GM12878 (cell line): ENCODE measurements at regions of chr16 and their contacts with region 1.

Region 1: GRCh38 chr16:68760671-68761275 is 23.7 kb downstream of the CDH1 start:
- DNase-seq: peak; percentile 95
- ATAC-seq: peak; percentile 73
- H3K4me3 ChIP-seq: peak overlapping the region; percentile 44
- H3K27ac ChIP-seq: peak overlapping the region; percentile 69
- H3K4me1 ChIP-seq: peaks cover 69% of the 10 kb centered on the region
- H3K27me3 ChIP-seq: no peaks in the 10 kb centered on the region
- CTCF ChIP-seq: no peak
- EP300 ChIP-seq: peak; percentile 58 to 84; a peak in 3 of 4 replicates
- POLR2A ChIP-seq: peak; percentile 69
- RAD21 ChIP-seq: 0 out of 2 replicates have a peak, but pooled peaks have one; percentile 10

Region 2: GRCh38 chr16:68528686-68529379 is 231.9 kb before region 1 on chr16:
- CTCF ChIA-PET with region 1: interaction called, 3 read pairs
- POLR2A ChIA-PET with region 1: no interaction called
- RAD21 ChIA-PET with region 1: interaction called, 6 read pairs
- SMC1A ChIA-PET with region 1: no interaction called
- in situ Hi-C with region 1: no loop called
- intact Hi-C with region 1: loop called (anchors 5 kb)
- DNase-seq: peak; percentile 39
- ATAC-seq: peak; percentile 90
- H3K4me3 ChIP-seq: no peak overlapping the region
- H3K27ac ChIP-seq: no peak overlapping the region
- H3K4me1 ChIP-seq: peaks cover 7% of the 10 kb centered on the region
- H3K27me3 ChIP-seq: no peaks in the 10 kb centered on the region
- CTCF ChIP-seq: peak; percentile 95 to 98 (median 96); a peak in 5 of 6 replicates
- EP300 ChIP-seq: no peak
- POLR2A ChIP-seq: no peak
- RAD21 ChIP-seq: peak; percentile 96

Region 3: GRCh38 chr16:68711421-68712139 is 49.2 kb before region 1 on chr16:
- CTCF ChIA-PET with region 1: interaction called, 5 read pairs
- POLR2A ChIA-PET with region 1: interaction called, 5 read pairs
- RAD21 ChIA-PET with region 1: interaction called, 20 read pairs
- SMC1A ChIA-PET with region 1: interaction called, 6 read pairs
- in situ Hi-C with region 1: no loop called
- intact Hi-C with region 1: no loop called
- DNase-seq: no peak
- ATAC-seq: peak; percentile 86
- H3K4me3 ChIP-seq: no peak overlapping the region
- H3K27ac ChIP-seq: no peak overlapping the region
- H3K4me1 ChIP-seq: peaks cover 7% of the 10 kb centered on the region
- H3K27me3 ChIP-seq: no peaks in the 10 kb centered on the region
- CTCF ChIP-seq: no peak
- EP300 ChIP-seq: no peak
- POLR2A ChIP-seq: no peak
- RAD21 ChIP-seq: no peak

Region 4: GRCh38 chr16:68737730-68738629 is 22.8 kb before region 1 on chr16:
- CTCF ChIA-PET with region 1: interaction called, 6 read pairs
- POLR2A ChIA-PET with region 1: interaction called, 17 read pairs
- RAD21 ChIA-PET with region 1: interaction called, 19 read pairs
- SMC1A ChIA-PET with region 1: interaction called, 26 read pairs
- in situ Hi-C with region 1: no loop called
- intact Hi-C with region 1: loop called (anchors 1 kb)
- DNase-seq: no peak
- ATAC-seq: no peak
- H3K4me3 ChIP-seq: no peak overlapping the region
- H3K27ac ChIP-seq: no peak overlapping the region
- H3K4me1 ChIP-seq: peaks cover 21% of the 10 kb centered on the region
- H3K27me3 ChIP-seq: no peaks in the 10 kb centered on the region; a peak in 1 of 4 replicates
- CTCF ChIP-seq: no peak
- EP300 ChIP-seq: no peak
- POLR2A ChIP-seq: no peak
- RAD21 ChIP-seq: no peak

Region 5: DNA sequence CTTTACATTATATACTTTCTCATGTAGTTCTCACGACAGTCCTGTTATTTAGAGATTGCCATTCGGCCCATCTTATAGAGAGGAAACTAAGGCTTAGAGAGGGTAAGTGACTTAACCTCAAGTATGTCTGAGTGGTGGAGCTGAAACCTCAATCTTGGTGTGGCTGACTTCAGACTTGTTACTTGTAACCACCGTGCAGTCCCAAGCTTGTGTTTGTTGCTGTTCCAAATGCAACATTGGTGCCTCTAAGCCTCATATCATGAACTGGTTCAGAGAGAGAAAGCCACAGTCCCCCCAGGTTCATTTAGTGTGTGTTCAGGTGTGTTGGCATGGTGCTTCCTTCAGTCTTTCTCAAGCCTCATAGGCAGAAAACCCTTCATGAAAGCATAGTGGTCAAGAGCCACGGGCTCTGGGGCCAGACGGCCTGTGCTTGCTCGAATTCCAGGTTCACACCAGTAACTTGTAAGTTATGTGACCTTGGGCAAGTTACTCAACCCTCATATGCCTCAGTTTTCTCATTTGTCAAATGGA is 16.1 kb after region 1 on chr16:
- CTCF ChIA-PET with region 1: interaction called, 27 read pairs
- POLR2A ChIA-PET with region 1: interaction called, 13 read pairs
- RAD21 ChIA-PET with region 1: interaction called, 25 read pairs
- SMC1A ChIA-PET with region 1: interaction called, 33 read pairs
- in situ Hi-C with region 1: no loop called
- intact Hi-C with region 1: loop called (anchors 1 kb)
- DNase-seq: peak; percentile 92
- ATAC-seq: peak; percentile 90
- H3K4me3 ChIP-seq: no peak overlapping the region
- H3K27ac ChIP-seq: peak overlapping the region; percentile 69
- H3K4me1 ChIP-seq: peaks cover 38% of the 10 kb centered on the region
- H3K27me3 ChIP-seq: no peaks in the 10 kb centered on the region
- CTCF ChIP-seq: no peak
- EP300 ChIP-seq: peak in 1 of 2 experiments; percentile 81; a peak in 3 of 4 replicates
- POLR2A ChIP-seq: no peak
- RAD21 ChIP-seq: no peak

Region 6: GRCh38 chr16:68800257-68800875 is 39.6 kb after region 1 on chr16:
- CTCF ChIA-PET with region 1: interaction called, 13 read pairs
- POLR2A ChIA-PET with region 1: no interaction called
- RAD21 ChIA-PET with region 1: interaction called, 22 read pairs
- SMC1A ChIA-PET with region 1: interaction called, 46 read pairs
- in situ Hi-C with region 1: no loop called
- intact Hi-C with region 1: loop called (anchors 1 kb)
- DNase-seq: peak; percentile 66
- ATAC-seq: peak; percentile 99
- H3K4me3 ChIP-seq: no peak overlapping the region
- H3K27ac ChIP-seq: 0 out of 2 replicates have a peak overlapping the region, but pooled peaks have one; percentile 13
- H3K4me1 ChIP-seq: no peaks in the 10 kb centered on the region
- H3K27me3 ChIP-seq: no peaks in the 10 kb centered on the region
- CTCF ChIP-seq: peak; percentile 84 to 93 (median 85)
- EP300 ChIP-seq: no peak
- POLR2A ChIP-seq: no peak
- RAD21 ChIP-seq: peak; percentile 100